Prostate gland (tissue), 2 donors: ENCODE measurements at regions of chr3 and their contacts with region 1.

Region 1: GRCh38 chr3:73490453-73491286 is 134.1 kb downstream of the PDZRN3 start:
- DNase-seq: no peak
- H3K4me3 ChIP-seq: no peak overlapping the region
- H3K27ac ChIP-seq: no peak overlapping the region
- H3K4me1 ChIP-seq: no peaks in the 10 kb centered on the region
- H3K27me3 ChIP-seq: no peaks in the 10 kb centered on the region
- CTCF ChIP-seq: no peak
- POLR2A ChIP-seq: no peak

Region 2: GRCh38 chr3:73324203-73325155 is 166.2 kb before region 1 on chr3:
- intact Hi-C with region 1: loop called (anchors 10 kb)
- DNase-seq: no peak
- H3K4me3 ChIP-seq: no peak overlapping the region
- H3K27ac ChIP-seq: no peak overlapping the region
- H3K4me1 ChIP-seq: no peaks in the 10 kb centered on the region
- H3K27me3 ChIP-seq: no peaks in the 10 kb centered on the region
- CTCF ChIP-seq: no peak
- POLR2A ChIP-seq: no peak